ENCODE measurements at regions of chr1 and their contacts with region 1.

Region 1: DNA sequence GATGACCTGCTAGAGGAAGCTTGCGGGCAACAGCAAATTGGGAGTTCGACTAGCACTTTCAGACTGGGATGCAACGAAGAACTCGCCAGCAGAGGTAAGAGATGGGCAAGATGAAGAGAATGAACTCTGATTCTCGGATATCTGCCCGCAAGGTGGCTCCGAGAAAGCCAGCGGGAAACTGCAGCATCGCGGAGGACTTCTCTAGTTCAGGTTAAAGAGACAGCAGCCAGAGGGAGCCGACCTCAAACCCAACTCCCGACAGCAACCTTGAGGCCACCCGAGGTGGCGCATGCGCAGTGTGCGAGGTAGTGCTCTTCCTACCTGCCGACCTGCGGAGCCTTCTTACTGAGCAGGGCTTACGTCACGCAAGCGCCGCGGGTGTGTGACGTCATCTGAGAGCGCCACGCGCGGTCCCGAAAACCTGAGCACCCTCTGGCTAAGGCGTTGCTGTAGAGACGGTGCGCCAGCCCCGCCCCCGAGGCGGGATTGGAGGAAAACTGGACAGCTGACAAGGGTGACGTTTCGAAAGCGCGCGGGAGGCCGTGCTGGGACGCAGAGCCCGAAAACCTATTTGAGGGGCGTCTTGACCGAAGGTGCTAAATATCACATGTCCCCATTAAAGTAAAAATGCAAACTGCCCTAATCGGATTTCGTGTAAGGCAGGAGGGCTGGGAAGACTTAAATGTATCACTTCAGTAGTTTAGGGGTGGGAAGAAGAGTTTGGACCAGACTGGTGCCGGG is 110.5 kb upstream of the SLC25A33 start:
- DNase-seq: peak; percentile 100
- ATAC-seq: peak; percentile 78
- H3K4me3 Mint-ChIP-seq: peak overlapping the region; percentile 95
- H3K27ac Mint-ChIP-seq: peak overlapping the region; percentile 97
- H3K4me1 Mint-ChIP-seq: peaks cover 59% of the 10 kb centered on the region
- H3K27me3 Mint-ChIP-seq: no peaks in the 10 kb centered on the region
- CTCF ChIP-seq: no peak

Region 2: DNA sequence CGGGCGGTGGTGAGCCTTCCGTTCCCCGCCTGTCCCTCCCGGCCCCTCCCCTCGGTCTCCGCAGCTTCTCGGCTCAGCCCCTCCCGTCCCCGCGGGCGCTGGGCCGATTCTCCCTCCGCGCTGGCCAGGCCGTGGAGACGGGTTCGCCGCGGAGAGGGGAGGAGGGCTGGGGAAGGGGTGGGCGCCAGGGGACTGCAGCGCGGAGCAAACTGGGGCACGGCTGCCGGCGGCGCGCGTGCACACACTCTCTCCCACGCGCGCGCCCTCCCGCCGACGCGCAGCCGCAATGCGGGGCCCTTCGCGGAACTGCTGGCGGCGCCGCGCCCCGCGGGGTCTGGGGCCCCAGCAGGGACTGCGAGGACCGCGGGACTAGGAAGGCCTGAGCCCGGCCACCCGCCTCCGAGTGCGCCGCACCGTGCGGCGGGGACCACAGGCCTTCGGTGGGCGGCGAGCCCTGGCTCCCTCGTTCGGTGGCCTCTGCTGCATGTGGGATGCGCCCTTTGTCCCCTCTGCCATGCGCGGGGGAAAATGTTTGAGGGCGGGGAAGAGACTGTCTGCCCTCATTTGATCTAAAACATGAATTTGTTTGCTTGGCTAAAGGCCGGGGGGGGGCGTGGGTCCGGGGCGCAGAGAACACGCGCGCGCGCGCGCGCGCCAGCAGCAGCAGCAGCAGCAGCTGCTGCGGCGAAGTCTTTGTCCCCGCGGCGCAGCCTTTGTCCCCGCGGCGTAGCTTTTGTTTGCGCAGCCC is 1748.4 kb before region 1 on chr1:
- CTCF ChIA-PET with region 1: no interaction called
- POLR2A ChIA-PET with region 1: no interaction called
- intact Hi-C with region 1: no loop called
- DNase-seq: peak; percentile 38
- ATAC-seq: peak; percentile 57
- H3K4me3 Mint-ChIP-seq: peak overlapping the region; percentile 82
- H3K27ac Mint-ChIP-seq: no peak overlapping the region
- H3K4me1 Mint-ChIP-seq: no peaks in the 10 kb centered on the region
- H3K27me3 Mint-ChIP-seq: peaks cover 5% of the 10 kb centered on the region
- CTCF ChIP-seq: no peak

Region 3: GRCh38 chr1:9058465-9058864 is 370.3 kb before region 1 on chr1:
- CTCF ChIA-PET with region 1: no interaction called
- POLR2A ChIA-PET with region 1: interaction called, 10 read pairs
- intact Hi-C with region 1: no loop called
- DNase-seq: no peak
- ATAC-seq: no peak
- H3K4me3 Mint-ChIP-seq: no peak overlapping the region
- H3K27ac Mint-ChIP-seq: no peak overlapping the region
- H3K4me1 Mint-ChIP-seq: peaks cover 12% of the 10 kb centered on the region
- H3K27me3 Mint-ChIP-seq: no peaks in the 10 kb centered on the region
- CTCF ChIP-seq: no peak

Region 4: GRCh38 chr1:9174243-9174642 is 254.5 kb before region 1 on chr1:
- CTCF ChIA-PET with region 1: no interaction called
- POLR2A ChIA-PET with region 1: no interaction called
- intact Hi-C with region 1: no loop called
- DNase-seq: no peak
- ATAC-seq: no peak
- H3K4me3 Mint-ChIP-seq: no peak overlapping the region
- H3K27ac Mint-ChIP-seq: no peak overlapping the region
- H3K4me1 Mint-ChIP-seq: peaks cover 2% of the 10 kb centered on the region
- H3K27me3 Mint-ChIP-seq: peaks cover 16% of the 10 kb centered on the region
- CTCF ChIP-seq: no peak

Region 5: DNA sequence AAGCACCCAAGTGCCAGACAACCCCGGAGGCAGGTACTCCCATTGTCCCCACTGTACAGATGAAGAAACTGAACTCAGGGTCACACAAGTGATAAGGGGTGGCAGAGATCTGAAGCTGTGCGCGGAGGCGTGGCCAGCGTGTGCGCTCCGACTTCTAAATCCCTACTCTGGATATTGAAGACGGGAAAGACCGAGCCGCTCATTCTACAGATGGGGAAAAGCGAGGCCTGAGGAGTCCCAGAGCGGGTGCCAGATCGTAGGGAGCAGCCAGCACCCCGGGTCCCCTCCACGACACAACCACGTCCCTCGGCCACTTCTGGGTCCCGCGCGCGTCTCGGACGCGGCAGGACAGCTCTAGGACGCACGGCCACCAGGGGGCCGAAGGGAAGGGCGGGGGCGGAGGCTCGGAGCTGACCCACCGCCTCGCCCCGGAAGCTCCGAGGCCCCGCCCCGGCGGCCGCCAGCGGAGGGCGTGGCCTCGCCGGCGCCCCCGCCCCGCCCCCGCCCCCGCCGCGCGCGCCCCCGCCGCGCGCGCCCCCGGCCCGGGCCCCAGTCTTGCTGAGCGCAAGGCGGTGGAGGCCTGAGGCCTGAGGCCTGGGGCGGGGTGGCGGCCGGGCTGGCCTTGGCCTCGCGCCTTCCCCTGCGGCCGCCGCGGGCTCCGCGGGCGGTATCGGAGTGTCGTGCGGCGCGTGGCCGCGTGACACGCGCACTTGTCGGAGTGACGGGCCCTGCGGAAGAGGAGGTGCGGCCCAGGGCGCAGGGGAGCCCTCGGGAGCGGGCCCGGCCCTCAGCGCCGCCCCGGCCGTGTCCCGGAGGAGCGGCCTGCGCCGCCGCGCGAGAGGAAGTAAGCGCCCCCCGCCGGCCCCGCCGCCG is 194.3 kb before region 1 on chr1 and contains the start of gene H6PD:
- CTCF ChIA-PET with region 1: no interaction called
- POLR2A ChIA-PET with region 1: interaction called, 4 read pairs
- intact Hi-C with region 1: loop called (anchors 1 kb)
- DNase-seq: peak; percentile 82
- ATAC-seq: peak; percentile 82
- H3K4me3 Mint-ChIP-seq: peak within 1 kb of the TSS; percentile 92
- H3K27ac Mint-ChIP-seq: peak within 1 kb of the TSS; percentile 94
- H3K4me1 Mint-ChIP-seq: peaks cover 34% of the 10 kb centered on the region
- H3K27me3 Mint-ChIP-seq: no peaks in the 10 kb centered on the region
- CTCF ChIP-seq: no peak
- total RNA-seq, gene H6PD: 20.3 and 21.9 TPM in 2 replicates

Region 6: DNA sequence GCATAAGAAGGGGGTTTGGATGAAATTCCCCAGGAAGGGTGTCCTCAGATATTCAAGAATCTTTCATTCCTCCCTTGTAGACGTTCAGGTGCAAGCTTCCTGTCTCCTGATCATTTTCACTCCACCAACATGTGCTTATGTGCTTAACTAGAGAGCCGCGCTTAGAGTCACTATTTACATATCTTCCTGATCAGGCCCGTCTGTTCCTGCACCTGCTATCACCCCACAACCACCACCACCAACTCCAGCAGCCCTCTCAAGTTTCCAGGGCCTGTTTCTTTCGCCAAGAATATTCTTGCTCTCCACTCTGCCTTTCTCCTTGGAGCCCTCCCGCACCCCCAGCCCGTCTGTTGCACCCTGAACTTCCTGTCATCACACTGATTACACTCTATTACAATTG is 22.7 kb before region 1 on chr1:
- CTCF ChIA-PET with region 1: interaction called, 3 read pairs
- POLR2A ChIA-PET with region 1: interaction called, 191 read pairs
- intact Hi-C with region 1: no loop called
- DNase-seq: no peak
- ATAC-seq: no peak
- H3K4me3 Mint-ChIP-seq: no peak overlapping the region
- H3K27ac Mint-ChIP-seq: peak overlapping the region; percentile 47
- H3K4me1 Mint-ChIP-seq: peaks cover 19% of the 10 kb centered on the region
- H3K27me3 Mint-ChIP-seq: no peaks in the 10 kb centered on the region
- CTCF ChIP-seq: no peak

Region 7: GRCh38 chr1:9455487-9456234 is 26.9 kb after region 1 on chr1:
- CTCF ChIA-PET with region 1: interaction called, 9 read pairs
- POLR2A ChIA-PET with region 1: interaction called, 5 read pairs
- intact Hi-C with region 1: loop called (anchors 2 kb)
- DNase-seq: peak; percentile 57
- ATAC-seq: peak; percentile 79
- H3K4me3 Mint-ChIP-seq: no peak overlapping the region
- H3K27ac Mint-ChIP-seq: no peak overlapping the region
- H3K4me1 Mint-ChIP-seq: peaks cover 2% of the 10 kb centered on the region
- H3K27me3 Mint-ChIP-seq: peaks cover 3% of the 10 kb centered on the region
- CTCF ChIP-seq: no peak

Region 8: GRCh38 chr1:9486466-9487140 is 57.8 kb after region 1 on chr1:
- CTCF ChIA-PET with region 1: no interaction called
- POLR2A ChIA-PET with region 1: no interaction called
- intact Hi-C with region 1: no loop called
- DNase-seq: no peak
- ATAC-seq: no peak
- H3K4me3 Mint-ChIP-seq: no peak overlapping the region
- H3K27ac Mint-ChIP-seq: no peak overlapping the region
- H3K4me1 Mint-ChIP-seq: peaks cover 4% of the 10 kb centered on the region
- H3K27me3 Mint-ChIP-seq: peaks cover 17% of the 10 kb centered on the region
- CTCF ChIP-seq: no peak

Measured in activated B cell treated with CpG ODN at 0.5 μM for 24 hours (primary cell).